CD4-positive, alpha-beta T cell (primary cell): ENCODE measurements at regions of chr4 and their contacts with region 1.

Region 1: GRCh38 chr4:112636688-112637551 is at the starts of genes LARP7 and ZGRF1:
- DNase-seq: peak; percentile 95 to 99 (median 96)
- ATAC-seq: peak; percentile 85
- H3K4me3 ChIP-seq: peak within 1 kb of the TSS; percentile 73
- H3K4me3 Mint-ChIP-seq: no peak within 1 kb of the TSS
- H3K27ac ChIP-seq: peak within 1 kb of the TSS; percentile 98
- H3K27ac Mint-ChIP-seq: no peak within 1 kb of the TSS
- H3K4me1 ChIP-seq: peaks cover 16% of the 10 kb centered on the region
- H3K4me1 Mint-ChIP-seq: peaks cover 18% of the 10 kb centered on the region
- H3K27me3 ChIP-seq: no peaks in the 10 kb centered on the region
- H3K27me3 Mint-ChIP-seq: no peaks in the 10 kb centered on the region
- CTCF ChIP-seq: peak; percentile 78
- total RNA-seq, gene LARP7: 42.9 to 43.5 TPM
- total RNA-seq, gene ZGRF1: 11.3 to 11.7 TPM

Region 2: DNA sequence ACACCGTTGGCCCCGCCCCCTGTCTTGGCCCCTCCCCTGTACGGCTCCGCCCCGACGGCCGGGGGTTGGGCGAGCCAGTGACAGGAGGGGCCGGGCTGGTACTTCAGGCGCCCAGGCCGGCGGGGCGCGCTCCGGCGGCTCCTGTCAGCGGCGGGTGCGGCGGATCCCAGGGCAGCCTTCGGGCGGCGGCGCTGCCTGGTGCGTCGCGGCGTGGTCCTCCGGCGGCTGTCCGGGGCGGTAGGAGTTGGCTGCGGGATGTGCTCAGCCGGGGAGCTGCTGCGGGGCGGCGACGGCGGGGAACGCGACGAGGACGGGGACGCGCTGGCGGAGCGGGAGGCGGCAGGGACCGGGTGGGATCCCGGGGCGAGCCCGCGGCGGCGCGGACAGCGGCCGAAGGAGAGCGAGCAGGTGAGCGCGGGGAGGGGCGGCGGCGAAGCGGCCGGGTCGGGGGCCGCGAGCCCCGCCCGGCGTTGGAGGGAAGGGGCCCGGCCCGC is 491.5 kb before region 1 on chr4 and contains the start of gene FAM241A:
- CTCF ChIA-PET with region 1: no interaction called
- POLR2A ChIA-PET with region 1: no interaction called
- intact Hi-C with region 1: loop called in 1 of 2 experiments (anchors 5 kb)
- DNase-seq: peak; percentile 79 to 93 (median 90)
- ATAC-seq: peak; percentile 94
- H3K4me3 ChIP-seq: peak within 1 kb of the TSS; percentile 70
- H3K4me3 Mint-ChIP-seq: peak within 1 kb of the TSS; percentile 93
- H3K27ac ChIP-seq: peak within 1 kb of the TSS; percentile 27 to 73
- H3K27ac Mint-ChIP-seq: peak within 1 kb of the TSS; percentile 85
- H3K4me1 ChIP-seq: peaks cover 6% of the 10 kb centered on the region
- H3K4me1 Mint-ChIP-seq: peaks cover 35% of the 10 kb centered on the region
- H3K27me3 ChIP-seq: no peaks in the 10 kb centered on the region
- H3K27me3 Mint-ChIP-seq: no peaks in the 10 kb centered on the region
- CTCF ChIP-seq: no peak
- total RNA-seq, gene FAM241A: 0.74 to 1.1 TPM

Region 3: DNA sequence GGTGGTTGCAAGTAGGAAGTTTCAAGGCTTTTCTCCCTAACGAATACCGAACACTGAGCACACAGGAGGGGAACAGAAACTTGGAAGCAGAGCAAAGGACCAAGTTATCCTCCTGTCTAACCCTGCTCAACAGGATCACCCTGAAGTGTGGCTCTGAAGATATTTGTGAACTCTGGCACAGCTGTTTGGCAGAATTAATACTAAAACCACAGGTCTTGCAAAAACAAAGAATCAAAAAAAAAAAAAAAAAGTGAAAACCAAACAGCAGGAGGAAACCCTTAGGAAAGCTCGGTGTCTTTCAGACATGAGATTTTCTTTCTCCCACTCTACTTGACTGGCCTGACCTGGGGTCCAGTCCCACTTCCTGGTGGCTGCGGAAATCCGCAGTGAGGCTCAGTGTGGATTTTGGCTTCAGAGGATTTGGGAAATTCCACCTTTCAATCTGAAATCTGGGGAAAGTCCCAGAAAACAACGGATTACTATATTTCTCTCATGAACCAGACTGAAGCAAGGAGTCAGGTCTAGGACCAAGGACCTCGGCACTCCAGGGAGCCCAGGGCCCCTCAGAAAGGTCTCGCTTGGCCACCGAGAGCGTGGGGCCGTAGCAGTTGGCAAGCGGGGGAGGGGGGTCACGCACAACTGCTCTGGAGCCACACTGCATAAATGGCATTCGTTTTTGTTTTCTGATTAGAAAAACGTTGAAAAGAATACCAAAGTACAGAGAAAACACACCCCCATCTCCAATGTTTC is 352.1 kb before region 1 on chr4:
- CTCF ChIA-PET with region 1: no interaction called
- POLR2A ChIA-PET with region 1: interaction called, 6 read pairs
- intact Hi-C with region 1: loop called in 1 of 2 experiments (anchors 5 kb)
- DNase-seq: peak in 3 of 14 experiments; percentile 38 to 80 (median 74)
- ATAC-seq: no peak
- H3K4me3 ChIP-seq: peak overlapping the region; percentile 78
- H3K4me3 Mint-ChIP-seq: peak overlapping the region; percentile 96
- H3K27ac ChIP-seq: peak overlapping the region; percentile 58 to 86
- H3K27ac Mint-ChIP-seq: peak overlapping the region; percentile 87
- H3K4me1 ChIP-seq: peaks cover 49% of the 10 kb centered on the region
- H3K4me1 Mint-ChIP-seq: peaks cover 88% of the 10 kb centered on the region
- H3K27me3 ChIP-seq: no peaks in the 10 kb centered on the region
- H3K27me3 Mint-ChIP-seq: no peaks in the 10 kb centered on the region
- CTCF ChIP-seq: no peak

Region 4: DNA sequence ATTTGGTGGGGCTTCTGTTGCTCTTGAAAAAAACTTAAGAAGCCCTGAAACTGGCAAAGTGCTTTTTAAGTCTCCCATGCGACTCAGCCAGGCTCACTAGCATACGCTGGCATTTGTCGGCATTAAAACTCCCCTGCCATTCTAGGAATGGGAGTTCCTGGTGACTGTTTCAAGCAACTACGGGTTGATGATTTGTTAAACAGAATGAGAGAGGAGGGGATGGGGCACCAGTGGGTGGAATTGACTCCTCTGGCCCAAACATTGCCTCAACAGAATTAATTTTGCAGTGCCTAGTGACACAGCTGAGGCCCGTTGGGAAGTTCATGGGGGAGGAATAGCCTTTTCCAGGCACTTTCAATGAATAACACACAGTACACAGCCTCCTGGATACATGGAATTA is 151.0 kb before region 1 on chr4:
- CTCF ChIA-PET with region 1: no interaction called
- POLR2A ChIA-PET with region 1: no interaction called
- intact Hi-C with region 1: no loop called
- DNase-seq: no peak
- ATAC-seq: no peak
- H3K4me3 ChIP-seq: no peak overlapping the region
- H3K4me3 Mint-ChIP-seq: no peak overlapping the region
- H3K27ac ChIP-seq: no peak overlapping the region
- H3K27ac Mint-ChIP-seq: no peak overlapping the region
- H3K4me1 ChIP-seq: no peaks in the 10 kb centered on the region
- H3K4me1 Mint-ChIP-seq: no peaks in the 10 kb centered on the region
- H3K27me3 ChIP-seq: peaks cover 0 to 17% of the 10 kb centered on the region in 2 experiments
- H3K27me3 Mint-ChIP-seq: peaks cover 30% of the 10 kb centered on the region
- CTCF ChIP-seq: no peak

Region 5: GRCh38 chr4:112523764-112524505 is 113.0 kb before region 1 on chr4:
- CTCF ChIA-PET with region 1: no interaction called
- POLR2A ChIA-PET with region 1: interaction called, 3 read pairs
- intact Hi-C with region 1: loop called in 1 of 2 experiments (anchors 5 kb)
- DNase-seq: peak; percentile 49 to 83 (median 70)
- ATAC-seq: peak; percentile 82
- H3K4me3 ChIP-seq: peak overlapping the region; percentile 51
- H3K4me3 Mint-ChIP-seq: peak overlapping the region; percentile 89
- H3K27ac ChIP-seq: no peak overlapping the region
- H3K27ac Mint-ChIP-seq: no peak overlapping the region
- H3K4me1 ChIP-seq: peaks cover 35% of the 10 kb centered on the region
- H3K4me1 Mint-ChIP-seq: peaks cover 51% of the 10 kb centered on the region
- H3K27me3 ChIP-seq: peaks cover 50 to 51% of the 10 kb centered on the region in 2 experiments
- H3K27me3 Mint-ChIP-seq: peaks cover 78% of the 10 kb centered on the region
- CTCF ChIP-seq: peak; percentile 74

Region 6: GRCh38 chr4:112938461-112939058 is 301.6 kb after region 1 on chr4:
- CTCF ChIA-PET with region 1: no interaction called
- POLR2A ChIA-PET with region 1: no interaction called
- intact Hi-C with region 1: loop called (anchors 2 to 5 kb)
- DNase-seq: peak in 3 of 14 experiments; percentile 7 to 9 (median 8)
- ATAC-seq: no peak
- H3K4me3 ChIP-seq: no peak overlapping the region
- H3K4me3 Mint-ChIP-seq: no peak overlapping the region
- H3K27ac ChIP-seq: no peak overlapping the region
- H3K27ac Mint-ChIP-seq: no peak overlapping the region
- H3K4me1 ChIP-seq: no peaks in the 10 kb centered on the region
- H3K4me1 Mint-ChIP-seq: no peaks in the 10 kb centered on the region
- H3K27me3 ChIP-seq: peaks cover 0 to 13% of the 10 kb centered on the region in 2 experiments
- H3K27me3 Mint-ChIP-seq: peaks cover 28% of the 10 kb centered on the region
- CTCF ChIP-seq: peak; percentile 50